Caco-2 (cell line): ENCODE measurements at regions of chr7 and their contacts with region 1.

Region 1: GRCh38 chr7:95871078-95871782 is 98.9 kb downstream of the DYNC1I1 start:
- DNase-seq: peak; percentile 46 to 59
- H3K4me3 ChIP-seq: no peak overlapping the region
- H3K4me3 Mint-ChIP-seq: no peak overlapping the region
- H3K27ac Mint-ChIP-seq: no peak overlapping the region
- H3K4me1 ChIP-seq: no peaks in the 10 kb centered on the region
- H3K4me1 Mint-ChIP-seq: no peaks in the 10 kb centered on the region
- H3K27me3 ChIP-seq: no peaks in the 10 kb centered on the region
- H3K27me3 Mint-ChIP-seq: peaks cover 3% of the 10 kb centered on the region
- CTCF ChIP-seq: peak; percentile 58 to 63

Region 2: DNA sequence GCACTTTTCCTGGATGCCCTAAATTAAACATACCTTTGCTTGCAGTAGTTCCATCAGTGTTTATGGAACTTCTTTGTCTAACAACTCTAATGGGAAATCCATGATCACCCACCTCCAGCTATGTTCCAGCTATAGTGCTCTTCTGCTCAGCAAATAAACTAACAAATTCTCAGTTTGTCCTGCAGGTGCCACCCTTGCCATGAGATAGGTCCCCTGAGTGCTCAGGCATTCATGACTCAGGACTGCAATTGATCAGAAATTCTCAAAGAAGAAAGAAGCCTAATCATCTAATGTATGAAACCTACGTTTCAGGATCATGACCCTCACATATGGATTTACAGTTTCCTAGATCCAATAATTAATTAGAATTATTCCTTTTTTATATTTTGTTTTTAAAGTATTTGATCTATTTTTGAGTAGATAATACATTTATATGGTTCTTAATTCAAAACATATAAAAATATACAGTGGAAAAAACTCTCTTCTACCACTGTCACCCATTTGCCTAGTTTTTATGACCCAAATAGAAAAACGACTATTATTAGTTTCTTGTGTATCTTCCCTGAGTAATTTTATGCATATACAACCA is 147.5 kb before region 1 on chr7:
- CTCF ChIA-PET with region 1: interaction called, 21 read pairs
- POLR2A ChIA-PET with region 1: no interaction called
- intact Hi-C with region 1: loop called (anchors 1 kb)
- DNase-seq: peak; percentile 58 to 61
- H3K4me3 ChIP-seq: no peak overlapping the region
- H3K4me3 Mint-ChIP-seq: no peak overlapping the region
- H3K27ac Mint-ChIP-seq: no peak overlapping the region
- H3K4me1 ChIP-seq: no peaks in the 10 kb centered on the region
- H3K4me1 Mint-ChIP-seq: no peaks in the 10 kb centered on the region
- H3K27me3 ChIP-seq: no peaks in the 10 kb centered on the region; the same call in 1 of the 2 replicates
- H3K27me3 Mint-ChIP-seq: peaks cover 17% of the 10 kb centered on the region
- CTCF ChIP-seq: peak; percentile 58 to 70

Region 3: DNA sequence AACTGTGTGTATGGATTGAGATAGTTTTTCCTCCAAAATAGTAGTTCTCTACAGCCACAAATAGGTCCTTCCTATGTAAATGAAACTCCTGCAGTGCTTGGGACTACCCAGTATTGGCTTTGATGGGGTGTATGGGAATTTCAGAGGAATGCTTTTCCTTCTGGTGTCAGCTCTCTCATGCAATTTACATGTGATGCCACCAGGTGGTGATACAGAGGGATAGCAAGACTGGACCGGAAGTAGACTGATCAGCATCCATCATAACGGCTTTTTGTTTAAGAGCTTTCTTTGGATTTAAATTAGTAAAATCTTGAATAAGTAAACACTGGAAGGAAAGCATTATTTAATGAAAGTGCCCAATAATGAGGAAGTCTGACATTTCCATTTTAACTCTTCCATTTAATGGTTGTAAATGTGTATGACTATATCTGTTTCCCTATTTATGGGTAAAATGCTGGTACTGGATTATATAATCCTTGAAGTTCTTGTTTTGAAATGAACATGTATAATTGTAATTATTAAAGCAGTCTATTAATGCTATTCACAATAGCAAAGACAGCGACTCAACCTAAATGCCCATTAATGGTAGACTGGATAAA is 76.2 kb before region 1 on chr7:
- CTCF ChIA-PET with region 1: interaction called, 17 read pairs
- POLR2A ChIA-PET with region 1: no interaction called
- intact Hi-C with region 1: loop called (anchors 1 kb)
- DNase-seq: peak in 1 of 2 experiments; percentile 37
- H3K4me3 ChIP-seq: no peak overlapping the region
- H3K4me3 Mint-ChIP-seq: no peak overlapping the region
- H3K27ac Mint-ChIP-seq: no peak overlapping the region
- H3K4me1 ChIP-seq: no peaks in the 10 kb centered on the region
- H3K4me1 Mint-ChIP-seq: no peaks in the 10 kb centered on the region
- H3K27me3 ChIP-seq: no peaks in the 10 kb centered on the region
- H3K27me3 Mint-ChIP-seq: peaks cover 13% of the 10 kb centered on the region
- CTCF ChIP-seq: peak; percentile 51 to 60